T-cell (primary cell): ENCODE measurements at regions of chr13 and their contacts with region 1.

Region 1: DNA sequence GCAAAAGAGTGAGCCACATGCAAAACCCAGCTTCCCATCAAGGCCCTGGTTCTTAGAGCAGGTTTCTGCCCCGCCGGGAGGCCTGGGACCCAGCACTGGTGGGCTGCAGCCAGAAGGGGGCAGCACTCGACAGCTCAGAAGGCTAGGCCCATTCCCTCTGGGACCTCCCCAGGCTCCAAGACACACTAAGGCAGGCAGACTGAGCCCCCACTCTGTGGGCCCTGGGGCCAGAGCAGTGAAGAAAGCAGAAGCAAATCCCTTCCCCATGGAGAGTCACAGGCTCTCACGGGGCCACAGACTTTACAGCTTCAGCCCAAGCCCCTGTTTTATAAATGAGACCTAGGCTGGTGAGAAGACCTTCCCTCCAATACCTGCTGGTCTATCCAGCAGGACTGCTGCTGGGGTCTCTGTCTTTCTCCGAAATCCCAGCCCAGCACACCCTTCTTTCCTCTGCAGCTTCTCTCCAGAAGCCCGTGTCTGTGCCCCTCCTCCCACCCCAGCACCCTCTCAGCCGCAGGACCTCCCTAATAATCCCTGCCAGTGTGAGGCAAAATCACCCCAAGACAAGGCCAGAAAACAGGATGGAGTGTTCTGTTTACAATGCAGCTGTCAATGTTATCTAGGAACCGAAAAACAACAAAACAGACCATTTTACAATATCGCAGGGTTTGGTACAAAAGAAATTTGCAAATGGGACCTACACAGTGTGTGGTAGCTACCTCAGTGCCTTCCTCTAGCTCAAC is 109.3 kb downstream of the ABCC4 start:
- DNase-seq: peak; percentile 1 to 67 (median 37)
- ATAC-seq: peak; percentile 58 to 76 (median 70)
- H3K4me3 ChIP-seq: no peak overlapping the region
- H3K4me3 Mint-ChIP-seq: no peak overlapping the region
- H3K27ac ChIP-seq: no peak overlapping the region
- H3K27ac Mint-ChIP-seq: peak overlapping the region in 1 of 2 donors; percentile 8
- H3K4me1 ChIP-seq: no peaks in the 10 kb centered on the region
- H3K4me1 Mint-ChIP-seq: peaks cover 5 to 16% (median 5%) of the 10 kb centered on the region in 3 donors
- H3K27me3 ChIP-seq: no peaks in the 10 kb centered on the region
- H3K27me3 Mint-ChIP-seq: no peaks in the 10 kb centered on the region

Region 2: GRCh38 chr13:93805736-93806135 is 1386.3 kb before region 1 on chr13:
- CTCF ChIA-PET with region 1: no interaction called
- POLR2A ChIA-PET with region 1: no interaction called
- DNase-seq: no peak
- ATAC-seq: no peak
- H3K4me3 ChIP-seq: no peak overlapping the region
- H3K4me3 Mint-ChIP-seq: no peak overlapping the region
- H3K27ac ChIP-seq: no peak overlapping the region
- H3K27ac Mint-ChIP-seq: no peak overlapping the region
- H3K4me1 ChIP-seq: no peaks in the 10 kb centered on the region
- H3K4me1 Mint-ChIP-seq: no peaks in the 10 kb centered on the region
- H3K27me3 ChIP-seq: no peaks in the 10 kb centered on the region
- H3K27me3 Mint-ChIP-seq: peaks cover 0 to 2% of the 10 kb centered on the region in 2 donors

Region 3: GRCh38 chr13:95146486-95146885 is 45.5 kb before region 1 on chr13:
- CTCF ChIA-PET with region 1: no interaction called
- POLR2A ChIA-PET with region 1: interaction called in 1 of 2 experiments, 11 read pairs
- DNase-seq: no peak
- ATAC-seq: no peak
- H3K4me3 ChIP-seq: no peak overlapping the region
- H3K4me3 Mint-ChIP-seq: no peak overlapping the region
- H3K27ac ChIP-seq: no peak overlapping the region
- H3K27ac Mint-ChIP-seq: no peak overlapping the region
- H3K4me1 ChIP-seq: no peaks in the 10 kb centered on the region
- H3K4me1 Mint-ChIP-seq: peaks cover 5 to 15% (median 9%) of the 10 kb centered on the region in 3 donors
- H3K27me3 ChIP-seq: no peaks in the 10 kb centered on the region
- H3K27me3 Mint-ChIP-seq: no peaks in the 10 kb centered on the region

Region 4: DNA sequence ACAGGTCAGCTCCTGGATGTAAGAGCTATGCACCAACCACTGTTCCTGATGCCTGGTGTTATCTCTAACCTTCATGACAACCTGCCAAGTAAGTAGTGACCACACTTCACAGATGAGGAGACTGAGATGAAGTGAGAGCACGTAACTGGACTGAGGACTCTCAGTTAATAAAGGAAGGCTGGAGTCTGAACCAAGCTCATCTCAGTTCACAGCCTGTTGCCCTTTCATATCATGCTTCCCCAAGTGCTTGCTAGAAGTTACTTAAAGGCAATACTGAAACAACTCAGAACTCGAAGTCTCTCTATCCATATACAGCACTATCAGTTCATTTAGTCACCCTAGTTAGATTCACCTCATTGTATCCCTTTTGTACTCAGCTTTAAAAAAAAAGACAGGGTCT is 10.4 kb before region 1 on chr13:
- CTCF ChIA-PET with region 1: interaction called, 5 to 10 read pairs
- POLR2A ChIA-PET with region 1: interaction called in 1 of 2 experiments, 3 read pairs
- DNase-seq: no peak
- ATAC-seq: no peak
- H3K4me3 ChIP-seq: no peak overlapping the region
- H3K4me3 Mint-ChIP-seq: no peak overlapping the region
- H3K27ac ChIP-seq: no peak overlapping the region
- H3K27ac Mint-ChIP-seq: peak overlapping the region; percentile 33 to 68
- H3K4me1 ChIP-seq: peaks cover 35 to 47% of the 10 kb centered on the region in 2 experiments
- H3K4me1 Mint-ChIP-seq: peaks cover 69 to 80% (median 72%) of the 10 kb centered on the region in 3 donors
- H3K27me3 ChIP-seq: no peaks in the 10 kb centered on the region
- H3K27me3 Mint-ChIP-seq: no peaks in the 10 kb centered on the region

Region 5: GRCh38 chr13:95226107-95226875 is 34.3 kb after region 1 on chr13:
- CTCF ChIA-PET with region 1: interaction called in 1 of 2 experiments, 10 read pairs
- POLR2A ChIA-PET with region 1: no interaction called
- DNase-seq: no peak
- ATAC-seq: no peak
- H3K4me3 ChIP-seq: no peak overlapping the region
- H3K4me3 Mint-ChIP-seq: no peak overlapping the region
- H3K27ac ChIP-seq: no peak overlapping the region
- H3K27ac Mint-ChIP-seq: no peak overlapping the region
- H3K4me1 ChIP-seq: no peaks in the 10 kb centered on the region
- H3K4me1 Mint-ChIP-seq: peaks cover 0 to 7% (median 7%) of the 10 kb centered on the region in 3 donors
- H3K27me3 ChIP-seq: no peaks in the 10 kb centered on the region
- H3K27me3 Mint-ChIP-seq: no peaks in the 10 kb centered on the region

Region 6: GRCh38 chr13:95378603-95379002 is 186.6 kb after region 1 on chr13:
- CTCF ChIA-PET with region 1: interaction called, 21 to 48 read pairs
- POLR2A ChIA-PET with region 1: interaction called in 1 of 2 experiments, 4 read pairs
- DNase-seq: no peak
- ATAC-seq: no peak
- H3K4me3 ChIP-seq: no peak overlapping the region
- H3K4me3 Mint-ChIP-seq: no peak overlapping the region
- H3K27ac ChIP-seq: no peak overlapping the region
- H3K27ac Mint-ChIP-seq: no peak overlapping the region
- H3K4me1 ChIP-seq: peaks cover 0 to 6% of the 10 kb centered on the region in 2 experiments
- H3K4me1 Mint-ChIP-seq: peaks cover 0 to 5% (median 3%) of the 10 kb centered on the region in 3 donors
- H3K27me3 ChIP-seq: no peaks in the 10 kb centered on the region
- H3K27me3 Mint-ChIP-seq: peaks cover 0 to 13% of the 10 kb centered on the region in 2 donors

Region 7: DNA sequence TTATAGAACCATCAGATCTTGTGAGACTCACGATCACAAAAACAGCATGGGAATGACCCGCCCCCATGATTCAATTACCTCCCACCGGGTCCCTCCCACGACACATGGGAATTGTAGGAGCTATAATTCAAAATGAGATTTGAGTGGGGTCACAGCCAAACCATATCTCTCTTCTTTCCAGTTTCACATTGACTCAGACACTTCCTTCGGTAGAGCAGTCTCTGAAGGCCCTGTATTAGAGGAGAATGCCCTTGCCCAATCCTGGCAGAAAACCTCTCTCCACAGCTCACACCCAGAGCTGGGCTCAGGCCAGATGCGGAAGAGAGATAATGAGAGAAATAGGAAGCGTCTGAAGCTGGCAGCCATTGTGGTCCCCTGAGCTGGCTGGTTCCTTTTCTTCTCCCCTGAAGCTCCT is 288.1 kb after region 1 on chr13:
- CTCF ChIA-PET with region 1: interaction called, 3 to 10 read pairs
- POLR2A ChIA-PET with region 1: no interaction called
- DNase-seq: peak in 1 of 35 experiments; percentile 23
- ATAC-seq: peak in 1 of 4 experiments; percentile 11
- H3K4me3 ChIP-seq: no peak overlapping the region
- H3K4me3 Mint-ChIP-seq: no peak overlapping the region
- H3K27ac ChIP-seq: no peak overlapping the region
- H3K27ac Mint-ChIP-seq: no peak overlapping the region
- H3K4me1 ChIP-seq: peaks cover 0 to 9% of the 10 kb centered on the region in 2 experiments
- H3K4me1 Mint-ChIP-seq: peaks cover 0 to 8% (median 2%) of the 10 kb centered on the region in 3 donors
- H3K27me3 ChIP-seq: peaks cover 0 to 3% of the 10 kb centered on the region in 2 experiments
- H3K27me3 Mint-ChIP-seq: peaks cover 0 to 5% of the 10 kb centered on the region in 2 donors